Mammary epithelial cell (primary cell): ENCODE measurements at regions of chr7 and their contacts with region 1.

Region 1: DNA sequence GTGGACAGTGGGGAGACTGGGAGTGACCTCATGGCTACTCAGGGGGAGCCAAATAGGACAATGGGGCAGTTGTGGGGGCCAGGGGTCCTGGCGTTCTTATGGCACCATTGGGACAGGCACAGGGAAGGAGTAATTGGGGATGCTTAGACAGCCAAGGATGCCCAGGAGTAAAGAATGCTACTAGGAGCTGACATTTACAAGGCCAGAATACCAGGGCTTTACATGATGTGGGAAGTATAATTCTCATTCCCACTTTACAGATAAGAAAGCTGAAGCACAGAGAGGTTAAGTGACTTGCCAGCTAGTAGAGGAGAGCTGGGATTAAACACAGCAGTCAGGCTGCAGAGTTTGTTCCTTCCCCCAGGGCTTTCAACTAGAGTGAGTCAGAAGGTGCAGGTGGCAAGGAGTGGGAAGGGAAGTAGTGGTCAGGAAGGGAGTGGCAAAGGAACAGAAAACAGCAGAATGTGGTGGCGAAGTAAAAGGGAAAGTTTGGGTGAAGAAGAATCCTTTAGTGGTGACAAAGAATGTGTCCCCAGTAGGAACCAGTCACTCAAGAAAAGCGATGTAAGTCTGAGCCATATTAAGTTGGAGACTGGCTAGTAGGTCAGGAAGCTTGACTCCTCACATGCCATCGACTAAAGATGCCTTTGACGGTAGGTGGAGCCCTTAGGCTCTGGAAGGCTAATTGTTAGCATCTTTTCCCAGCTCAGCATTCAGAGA is 32.8 kb downstream of the CPVL start:
- DNase-seq: peak; percentile 91
- H3K4me3 ChIP-seq: peak overlapping the region in 1 of 3 experiments; percentile 32
- H3K27ac ChIP-seq: peak overlapping the region; percentile 53
- H3K4me1 ChIP-seq: peaks cover 54% of the 10 kb centered on the region
- H3K27me3 ChIP-seq: no peaks in the 10 kb centered on the region
- CTCF ChIP-seq: peak; percentile 44 to 58

Region 2: DNA sequence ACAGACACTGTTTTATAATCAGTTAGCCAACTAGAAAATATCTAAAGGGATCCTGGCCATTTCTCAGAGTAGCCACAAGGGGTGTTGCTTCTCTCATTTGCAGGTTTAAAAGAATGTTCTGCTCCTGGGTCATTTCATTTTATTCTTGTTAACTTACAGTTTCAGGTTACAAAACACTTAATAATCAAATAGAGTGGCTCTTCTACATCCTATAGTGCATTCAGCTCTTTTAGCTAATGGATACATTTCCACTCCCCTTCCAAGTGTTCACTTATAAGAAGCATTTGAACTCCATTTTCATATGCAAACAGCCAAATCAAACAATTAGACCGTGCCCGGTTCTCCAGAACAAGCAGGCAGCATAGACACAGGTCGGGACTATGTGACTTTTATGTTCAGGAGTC is 272.9 kb before region 1 on chr7:
- CTCF ChIA-PET with region 1: no interaction called
- dilution Hi-C with region 1: no loop called
- in situ Hi-C with region 1: no loop called
- intact Hi-C with region 1: no loop called
- DNase-seq: no peak
- H3K4me3 ChIP-seq: no peak overlapping the region
- H3K27ac ChIP-seq: no peak overlapping the region
- H3K4me1 ChIP-seq: no peaks in the 10 kb centered on the region
- H3K27me3 ChIP-seq: no peaks in the 10 kb centered on the region
- CTCF ChIP-seq: peak; percentile 57 to 64

Region 3: GRCh38 chr7:29038463-29038862 is 75.1 kb before region 1 on chr7:
- CTCF ChIA-PET with region 1: no interaction called
- dilution Hi-C with region 1: no loop called
- in situ Hi-C with region 1: no loop called
- intact Hi-C with region 1: no loop called
- DNase-seq: no peak
- H3K4me3 ChIP-seq: no peak overlapping the region
- H3K27ac ChIP-seq: no peak overlapping the region
- H3K4me1 ChIP-seq: peaks cover 10% of the 10 kb centered on the region
- H3K27me3 ChIP-seq: no peaks in the 10 kb centered on the region
- CTCF ChIP-seq: no peak

Region 4: DNA sequence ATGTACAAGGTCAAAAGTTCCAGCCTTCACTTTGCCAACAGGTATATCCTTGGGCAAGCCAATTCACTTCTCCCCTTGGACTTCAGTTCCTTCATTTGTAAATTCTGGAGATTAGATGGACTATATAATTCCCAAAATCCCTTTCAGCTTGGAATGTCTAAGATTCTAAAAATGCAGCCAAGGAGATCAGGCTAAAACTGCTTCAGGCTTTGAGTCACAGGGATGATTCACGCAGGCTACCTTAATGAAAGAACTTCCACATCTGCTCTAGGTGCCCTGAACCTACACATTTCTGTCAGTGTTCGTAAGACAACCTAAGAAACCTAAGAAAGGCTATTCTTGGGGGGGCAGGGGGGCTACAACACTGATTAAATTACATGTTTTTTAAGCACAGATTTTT is 25.6 kb after region 1 on chr7:
- CTCF ChIA-PET with region 1: no interaction called
- dilution Hi-C with region 1: no loop called
- in situ Hi-C with region 1: no loop called
- intact Hi-C with region 1: loop called (anchors 2 kb)
- DNase-seq: peak; percentile 73
- H3K4me3 ChIP-seq: no peak overlapping the region
- H3K27ac ChIP-seq: peak overlapping the region; percentile 14
- H3K4me1 ChIP-seq: peaks cover 23% of the 10 kb centered on the region
- H3K27me3 ChIP-seq: no peaks in the 10 kb centered on the region
- CTCF ChIP-seq: no peak

Region 5: GRCh38 chr7:29177963-29178600 is 64.5 kb after region 1 on chr7:
- CTCF ChIA-PET with region 1: no interaction called
- dilution Hi-C with region 1: no loop called
- in situ Hi-C with region 1: no loop called
- intact Hi-C with region 1: no loop called
- DNase-seq: no peak
- H3K4me3 ChIP-seq: no peak overlapping the region
- H3K27ac ChIP-seq: no peak overlapping the region
- H3K4me1 ChIP-seq: no peaks in the 10 kb centered on the region
- H3K27me3 ChIP-seq: no peaks in the 10 kb centered on the region
- CTCF ChIP-seq: no peak